PC-9 (cell line): ENCODE measurements at regions of chr3 and their contacts with region 1.

Region 1: DNA sequence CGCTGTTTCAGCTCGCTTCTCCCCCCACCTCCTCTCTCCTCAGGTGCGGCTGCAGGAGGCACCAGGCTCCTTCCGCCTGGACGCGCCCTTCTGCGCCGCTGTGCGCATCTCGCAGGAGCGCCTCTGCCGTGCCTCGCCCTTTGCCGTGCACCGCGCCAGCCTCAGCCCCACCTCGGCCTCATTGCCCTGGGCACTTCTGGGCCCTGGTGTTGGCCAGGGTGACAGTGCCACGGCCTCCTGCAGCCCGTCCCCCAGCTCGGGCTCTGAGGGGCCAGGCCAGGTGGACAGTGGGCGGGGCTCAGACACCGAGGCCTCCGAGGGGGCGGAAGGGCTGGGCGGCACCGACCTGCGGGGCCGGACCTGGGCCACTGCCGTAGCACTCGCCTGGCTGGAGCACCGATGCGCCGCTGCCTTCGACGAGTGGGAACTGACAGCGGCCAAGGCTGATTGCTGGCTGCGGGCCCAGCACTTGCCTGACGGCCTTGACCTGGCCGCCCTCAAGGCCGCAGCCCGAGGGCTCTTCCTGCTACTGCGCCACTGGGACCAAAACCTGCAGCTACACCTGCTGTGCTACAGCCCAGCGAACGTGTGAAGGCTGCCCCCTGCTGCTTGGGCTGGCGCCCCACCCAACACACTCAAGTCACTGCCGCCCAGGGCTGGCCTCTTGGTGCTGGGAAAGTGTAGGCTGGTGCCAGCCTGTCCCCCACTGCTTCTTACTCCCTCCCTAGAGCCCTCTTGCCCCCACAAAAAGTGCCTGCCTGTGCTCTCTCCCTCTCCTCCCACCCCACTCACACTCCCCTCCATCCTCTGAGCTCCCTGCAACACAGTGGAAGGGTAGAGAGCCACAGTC is 7.1 kb downstream of the ALG3 start:
- DNase-seq: peak; percentile 72 to 94
- H3K4me3 ChIP-seq: no peak overlapping the region; the same call in 1 of the 2 replicates
- H3K27ac ChIP-seq: no peak overlapping the region
- H3K4me1 ChIP-seq: 0 out of 2 replicates have a peak, but pooled peaks cover 7% of the 10 kb centered on the region
- H3K27me3 ChIP-seq: no peaks in the 10 kb centered on the region
- CTCF ChIP-seq: peak; percentile 70

Region 2: DNA sequence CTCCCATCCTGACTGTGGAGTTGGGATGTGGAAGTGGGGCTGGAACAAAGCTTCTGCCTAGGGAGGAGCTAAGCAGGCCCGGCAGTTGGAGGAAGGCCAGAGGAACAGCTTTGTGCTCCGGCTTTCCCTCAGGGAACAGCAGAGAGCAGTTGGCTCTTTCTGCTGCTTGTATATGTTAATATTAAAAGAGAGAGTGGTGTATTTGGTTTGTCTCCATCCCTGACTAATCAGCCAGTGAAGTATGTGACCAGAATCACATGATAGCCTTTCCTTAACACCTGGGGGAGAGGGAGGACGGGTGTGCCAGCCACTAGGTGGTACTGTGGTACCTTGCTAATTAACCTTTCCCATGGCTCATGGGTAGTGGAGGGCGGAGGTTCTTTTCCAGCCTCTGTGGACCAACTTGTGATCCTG is 96.6 kb before region 1 on chr3:
- CTCF ChIA-PET with region 1: interaction called, 4 read pairs
- POLR2A ChIA-PET with region 1: no interaction called
- intact Hi-C with region 1: loop called (anchors 1 kb)
- DNase-seq: peak; percentile 71 to 74
- H3K4me3 ChIP-seq: no peak overlapping the region
- H3K27ac ChIP-seq: no peak overlapping the region
- H3K4me1 ChIP-seq: no peaks in the 10 kb centered on the region
- H3K27me3 ChIP-seq: no peaks in the 10 kb centered on the region
- CTCF ChIP-seq: peak; percentile 79

Region 3: DNA sequence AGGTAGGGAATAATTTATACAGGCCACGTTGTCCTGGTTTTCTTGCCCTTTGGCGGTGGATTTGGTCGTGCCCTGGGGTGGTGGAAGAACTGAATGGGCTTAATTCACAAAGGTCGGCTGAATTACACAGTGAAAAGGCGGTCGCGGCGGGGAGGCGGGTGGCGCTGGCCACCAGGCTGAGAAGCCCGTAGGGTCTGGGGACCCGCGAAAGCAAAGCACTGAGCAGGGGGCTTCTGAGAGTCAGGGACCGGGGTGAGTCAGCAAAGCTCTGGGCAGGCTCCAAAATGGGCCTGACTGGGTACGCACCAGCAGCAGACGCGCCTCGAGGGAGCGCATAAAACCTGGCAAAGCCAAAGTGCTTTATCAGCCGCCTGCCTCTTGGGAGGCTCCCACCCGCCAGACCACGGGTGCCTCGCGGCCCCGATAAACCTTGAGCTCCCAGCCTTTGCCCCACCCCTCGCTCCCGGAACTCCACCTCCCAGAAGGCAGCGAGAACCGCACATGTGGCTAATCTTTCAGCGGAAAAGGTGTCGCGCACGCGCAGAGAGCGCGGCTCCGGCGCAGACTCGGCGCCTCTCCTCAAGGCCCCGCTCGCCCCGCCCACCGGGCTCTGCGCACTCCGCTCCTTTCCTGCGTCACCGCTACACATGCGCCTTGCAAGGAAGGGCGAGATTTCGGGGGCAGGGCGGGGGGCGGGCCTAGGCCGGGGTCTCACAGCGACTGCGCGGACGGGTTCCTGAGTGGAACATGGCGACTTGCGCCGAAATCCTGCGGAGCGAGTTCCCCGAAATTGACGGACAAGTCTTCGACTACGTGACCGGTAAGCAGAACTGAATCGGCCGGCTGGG is 56.0 kb before region 1 on chr3 and contains the start of gene ABCF3:
- CTCF ChIA-PET with region 1: no interaction called
- POLR2A ChIA-PET with region 1: interaction called, 6 read pairs
- intact Hi-C with region 1: loop called (anchors 2 kb)
- DNase-seq: peak; percentile 97 to 100
- H3K4me3 ChIP-seq: peak within 1 kb of the TSS; percentile 78
- H3K27ac ChIP-seq: peak within 1 kb of the TSS; percentile 74
- H3K4me1 ChIP-seq: peaks cover 17% of the 10 kb centered on the region
- H3K27me3 ChIP-seq: no peaks in the 10 kb centered on the region
- CTCF ChIP-seq: no peak
- total RNA-seq, gene ABCF3: 98.8 and 137 TPM in 2 replicates